ENCODE measurements at regions of chr18 and their contacts with region 1.

Region 1: DNA sequence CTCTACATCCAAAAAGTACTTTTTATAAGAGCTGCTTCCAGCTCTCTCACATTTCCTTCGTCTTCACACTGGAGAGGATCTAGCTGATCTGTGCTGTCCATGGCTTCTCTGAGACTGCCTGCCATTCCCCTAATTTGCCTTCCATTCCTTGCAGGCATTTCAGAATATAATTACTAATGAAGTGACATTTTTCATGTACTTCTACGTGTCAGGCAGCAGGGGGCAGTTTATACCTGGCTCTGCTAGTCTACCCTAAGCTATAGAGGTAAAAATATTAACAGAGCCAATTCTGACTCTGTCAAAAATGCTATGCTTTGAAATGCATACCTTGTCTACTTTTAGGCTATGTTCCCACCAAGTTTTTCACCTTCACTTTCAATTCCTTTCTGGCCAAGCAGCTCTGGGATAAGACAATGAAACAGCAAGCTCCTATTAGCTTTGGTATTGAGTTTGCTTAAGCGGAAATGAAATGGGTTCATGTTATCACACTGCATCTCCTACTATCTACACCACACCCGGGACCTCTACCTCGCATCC is 81.9 kb downstream of the MEP1B start:
- DNase-seq: peak; percentile 30
- ATAC-seq: peak; percentile 68
- H3K4me3 ChIP-seq: no peak overlapping the region
- H3K27ac ChIP-seq: no peak overlapping the region
- H3K4me1 ChIP-seq: no peaks in the 10 kb centered on the region
- H3K27me3 ChIP-seq: no peaks in the 10 kb centered on the region
- CTCF ChIP-seq: peak; percentile 62

Region 2: GRCh38 chr18:32158108-32158624 is 113.6 kb before region 1 on chr18:
- CTCF ChIA-PET with region 1: no interaction called
- POLR2A ChIA-PET with region 1: no interaction called
- intact Hi-C with region 1: loop called (anchors 2 kb)
- DNase-seq: peak; percentile 75
- ATAC-seq: peak; percentile 95
- H3K4me3 ChIP-seq: peak overlapping the region; percentile 54; the same call in 1 of the 2 replicates
- H3K27ac ChIP-seq: no peak overlapping the region
- H3K4me1 ChIP-seq: no peaks in the 10 kb centered on the region
- H3K27me3 ChIP-seq: no peaks in the 10 kb centered on the region
- CTCF ChIP-seq: peak; percentile 66

Region 3: GRCh38 chr18:32582455-32582854 is 310.7 kb after region 1 on chr18:
- CTCF ChIA-PET with region 1: no interaction called
- POLR2A ChIA-PET with region 1: no interaction called
- intact Hi-C with region 1: no loop called
- DNase-seq: no peak
- ATAC-seq: no peak
- H3K4me3 ChIP-seq: no peak overlapping the region
- H3K27ac ChIP-seq: no peak overlapping the region
- H3K4me1 ChIP-seq: no peaks in the 10 kb centered on the region
- H3K27me3 ChIP-seq: no peaks in the 10 kb centered on the region; the same call in 1 of the 2 replicates
- CTCF ChIP-seq: no peak

Measured in PC-3 (cell line).